HepG2 (cell line): ENCODE measurements at regions of chr10 and their contacts with region 1.

Region 1: DNA sequence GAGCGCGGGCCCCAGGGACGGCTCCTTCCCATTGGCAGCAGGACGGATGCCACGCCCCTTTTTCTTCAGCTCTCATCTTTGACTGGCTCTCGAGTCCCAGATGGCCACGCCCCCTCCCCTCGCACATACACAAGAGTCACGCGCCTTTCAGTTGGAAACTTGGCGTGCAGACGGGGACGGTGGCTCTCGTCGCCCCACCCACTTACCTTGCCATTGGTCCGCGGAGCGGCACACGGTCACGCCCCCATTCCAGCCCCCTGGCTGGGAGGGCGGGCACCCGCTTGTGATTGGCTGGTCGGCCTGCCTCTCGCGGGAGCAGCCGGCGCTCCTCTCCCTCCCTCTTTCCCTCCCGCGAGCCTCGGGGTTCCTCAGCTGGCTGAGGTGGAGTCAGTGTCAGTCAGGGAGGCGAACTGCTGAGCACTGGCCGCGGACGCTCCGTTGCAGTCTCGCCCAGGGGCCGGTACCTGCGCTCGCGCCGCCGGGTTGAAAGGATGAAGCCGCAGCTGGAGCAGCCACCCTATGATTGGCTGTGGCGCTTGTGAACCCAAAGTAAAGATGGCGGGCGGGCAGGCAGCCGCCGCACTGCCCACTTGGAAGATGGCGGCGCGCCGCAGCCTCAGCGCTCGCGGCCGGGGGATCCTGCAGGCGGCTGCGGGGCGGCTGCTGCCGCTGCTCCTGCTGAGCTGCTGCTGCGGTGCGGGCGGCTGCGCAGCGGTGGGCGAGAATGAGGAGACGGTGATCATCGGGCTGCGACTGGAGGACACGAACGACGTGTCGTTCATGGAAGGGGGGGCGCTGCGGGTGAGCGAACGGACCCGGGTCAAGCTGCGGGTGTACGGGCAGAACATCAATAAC is at the start of gene CNNM2:
- DNase-seq: peak; percentile 99
- ATAC-seq: peak; percentile 85
- H3K4me3 ChIP-seq: peak within 1 kb of the TSS; percentile 97 to 99 (median 99)
- H3K27ac ChIP-seq: peak within 1 kb of the TSS; percentile 88
- H3K4me1 ChIP-seq: peaks cover 38% of the 10 kb centered on the region
- H3K27me3 ChIP-seq: no peaks in the 10 kb centered on the region; a peak in 1 of 5 replicates
- CTCF ChIP-seq: peak; percentile 34; the same call in 1 of the 2 replicates
- EP300 ChIP-seq: no peak
- POLR2A ChIP-seq: peak; percentile 62 to 70; a peak in 3 of 4 replicates
- RAD21 ChIP-seq: peak; percentile 41
- total RNA-seq, gene CNNM2: 3.4 and 9.0 TPM in 2 replicates

Region 2: GRCh38 chr10:102988404-102989314 is 70.5 kb after region 1 on chr10:
- CTCF ChIA-PET with region 1: no interaction called
- POLR2A ChIA-PET with region 1: interaction called, 6 read pairs
- in situ Hi-C with region 1: no loop called
- intact Hi-C with region 1: loop called (anchors 5 kb)
- DNase-seq: peak; percentile 97
- ATAC-seq: peak; percentile 97
- H3K4me3 ChIP-seq: peak overlapping the region; percentile 2 to 55 (median 38); a peak in 3 of 6 replicates
- H3K27ac ChIP-seq: peak overlapping the region; percentile 92
- H3K4me1 ChIP-seq: peaks cover 92% of the 10 kb centered on the region
- H3K27me3 ChIP-seq: no peaks in the 10 kb centered on the region
- CTCF ChIP-seq: no peak
- EP300 ChIP-seq: peak in 1 of 2 experiments; percentile 91; a peak in 2 of 4 replicates
- POLR2A ChIP-seq: no peak
- RAD21 ChIP-seq: no peak

Region 3: DNA sequence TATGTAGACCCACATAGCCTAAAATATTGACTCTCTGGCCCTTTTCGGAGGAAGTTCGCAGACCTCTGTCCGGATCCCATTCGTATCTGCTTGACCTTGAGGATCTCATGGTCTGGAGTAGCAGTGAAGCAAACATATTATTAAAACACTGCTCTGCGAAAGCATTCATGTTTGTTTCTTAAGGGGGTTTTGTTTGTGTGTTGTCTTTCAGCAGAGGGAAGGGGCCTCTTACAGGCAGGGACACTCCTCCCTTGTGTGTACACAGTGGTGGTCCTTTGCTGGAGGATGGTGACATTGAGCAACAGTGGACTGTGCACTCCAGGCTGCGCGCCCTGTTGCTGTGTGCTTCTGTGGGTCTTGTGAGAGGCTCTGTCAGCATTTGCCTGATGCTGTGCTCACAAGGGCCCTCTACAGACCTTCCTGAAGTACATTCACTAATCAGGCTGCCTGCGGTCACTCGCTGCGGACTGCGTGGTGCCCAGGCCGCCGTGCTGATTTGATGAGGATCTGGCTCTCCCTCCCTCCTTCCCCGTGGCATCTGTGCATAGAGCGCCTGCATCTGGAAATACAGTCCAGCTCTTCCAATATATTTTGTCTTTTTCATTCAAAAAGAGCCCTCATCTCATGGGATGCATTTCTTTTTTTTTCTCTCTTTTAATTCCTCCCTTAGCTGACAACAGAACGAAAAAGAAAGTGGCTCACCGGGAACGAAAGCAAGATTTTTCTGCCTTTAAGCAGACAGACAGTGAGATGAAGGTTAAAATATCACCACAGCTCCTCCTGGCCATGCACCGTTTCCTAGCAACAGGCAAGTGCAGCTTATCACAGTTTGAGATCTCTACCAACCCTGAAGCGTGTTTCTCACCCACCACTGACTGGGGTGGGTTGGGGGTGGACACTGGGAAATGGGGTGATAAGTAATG is 135.7 kb after region 1 on chr10:
- CTCF ChIA-PET with region 1: interaction called, 18 read pairs
- POLR2A ChIA-PET with region 1: interaction called, 7 read pairs
- in situ Hi-C with region 1: no loop called
- intact Hi-C with region 1: loop called (anchors 1 kb)
- DNase-seq: peak; percentile 96
- ATAC-seq: peak; percentile 99
- H3K4me3 ChIP-seq: peak overlapping the region in 2 of 3 experiments; percentile 41 to 54; a peak in 4 of 6 replicates
- H3K27ac ChIP-seq: peak overlapping the region; percentile 50
- H3K4me1 ChIP-seq: peaks cover 21% of the 10 kb centered on the region
- H3K27me3 ChIP-seq: no peaks in the 10 kb centered on the region
- CTCF ChIP-seq: peak; percentile 94
- EP300 ChIP-seq: peak; percentile 63 to 87; a peak in 3 of 4 replicates
- POLR2A ChIP-seq: no peak
- RAD21 ChIP-seq: peak; percentile 93

Region 4: GRCh38 chr10:103069453-103070331 is 151.5 kb after region 1 on chr10:
- CTCF ChIA-PET with region 1: interaction called, 63 read pairs
- POLR2A ChIA-PET with region 1: interaction called, 4 read pairs
- in situ Hi-C with region 1: loop called (anchors 5 kb)
- intact Hi-C with region 1: loop called (anchors 1 kb)
- DNase-seq: peak; percentile 41
- ATAC-seq: peak; percentile 81
- H3K4me3 ChIP-seq: no peak overlapping the region
- H3K27ac ChIP-seq: no peak overlapping the region
- H3K4me1 ChIP-seq: no peaks in the 10 kb centered on the region
- H3K27me3 ChIP-seq: no peaks in the 10 kb centered on the region
- CTCF ChIP-seq: peak; percentile 83
- EP300 ChIP-seq: no peak
- POLR2A ChIP-seq: no peak
- RAD21 ChIP-seq: peak; percentile 94